MCF 10A (cell line): ENCODE measurements at regions of chr6 and their contacts with region 1.

Region 1: GRCh38 chr6:133184798-133185372 is 56.3 kb upstream of the EYA4 start:
- DNase-seq: peak; percentile 22
- H3K4me3 Mint-ChIP-seq: no peak overlapping the region
- H3K27ac Mint-ChIP-seq: no peak overlapping the region
- H3K4me1 Mint-ChIP-seq: no peaks in the 10 kb centered on the region
- H3K27me3 Mint-ChIP-seq: peaks cover 73% of the 10 kb centered on the region
- CTCF ChIP-seq: peak; percentile 55

Region 2: GRCh38 chr6:132236744-132237143 is 948.1 kb before region 1 on chr6:
- CTCF ChIA-PET with region 1: no interaction called
- POLR2A ChIA-PET with region 1: no interaction called
- intact Hi-C with region 1: no loop called
- DNase-seq: no peak
- H3K4me3 Mint-ChIP-seq: no peak overlapping the region
- H3K27ac Mint-ChIP-seq: no peak overlapping the region
- H3K4me1 Mint-ChIP-seq: no peaks in the 10 kb centered on the region
- H3K27me3 Mint-ChIP-seq: no peaks in the 10 kb centered on the region
- CTCF ChIP-seq: no peak

Region 3: GRCh38 chr6:132830334-132830751 is 354.5 kb before region 1 on chr6:
- CTCF ChIA-PET with region 1: interaction called, 3 read pairs
- POLR2A ChIA-PET with region 1: no interaction called
- intact Hi-C with region 1: loop called (anchors 5 kb)
- DNase-seq: peak; percentile 45
- H3K4me3 Mint-ChIP-seq: no peak overlapping the region
- H3K27ac Mint-ChIP-seq: no peak overlapping the region
- H3K4me1 Mint-ChIP-seq: no peaks in the 10 kb centered on the region
- H3K27me3 Mint-ChIP-seq: peaks cover 19% of the 10 kb centered on the region
- CTCF ChIP-seq: peak; percentile 41

Region 4: DNA sequence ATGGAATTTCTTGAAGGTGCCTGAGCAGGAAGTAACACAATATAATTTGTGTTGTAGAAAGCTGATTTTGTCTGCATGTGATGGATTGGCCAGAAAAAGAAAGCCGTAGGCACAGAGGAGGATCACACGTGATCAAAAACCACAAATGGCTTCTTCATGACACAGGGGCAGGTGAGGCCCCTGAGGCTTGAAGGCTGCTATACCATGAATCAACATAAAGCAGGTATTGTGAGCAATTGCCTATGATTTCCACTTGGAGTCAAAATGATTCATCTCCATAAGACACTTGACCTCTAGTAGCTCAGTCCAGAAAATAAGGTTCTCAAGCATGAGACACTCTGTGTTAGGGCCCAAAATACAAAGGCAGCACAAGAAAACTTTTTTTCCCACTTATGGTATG is 13.8 kb after region 1 on chr6:
- CTCF ChIA-PET with region 1: interaction called, 10 read pairs
- POLR2A ChIA-PET with region 1: no interaction called
- intact Hi-C with region 1: no loop called
- DNase-seq: peak; percentile 5
- H3K4me3 Mint-ChIP-seq: no peak overlapping the region
- H3K27ac Mint-ChIP-seq: no peak overlapping the region
- H3K4me1 Mint-ChIP-seq: no peaks in the 10 kb centered on the region
- H3K27me3 Mint-ChIP-seq: peaks cover 100% of the 10 kb centered on the region
- CTCF ChIP-seq: no peak

Region 5: DNA sequence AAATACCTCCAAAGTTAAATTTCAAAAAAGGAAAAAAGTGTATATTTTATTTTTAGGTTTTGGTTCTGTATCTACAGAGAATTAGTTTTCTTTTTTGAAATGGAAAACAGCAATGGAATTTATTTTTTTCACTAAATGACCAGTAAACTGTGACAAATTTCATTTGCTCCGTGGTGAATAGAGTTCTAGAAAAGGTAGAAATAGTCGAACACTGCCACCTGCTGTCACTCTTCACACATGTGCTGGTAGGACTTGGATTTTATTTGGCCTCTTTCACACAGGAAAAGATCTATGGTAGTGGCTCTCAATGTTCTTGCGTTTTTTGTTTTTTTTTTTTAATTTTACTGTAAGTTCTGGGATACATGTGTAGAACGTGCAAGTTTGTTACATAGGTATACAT is 368.8 kb after region 1 on chr6:
- CTCF ChIA-PET with region 1: interaction called, 12 read pairs
- POLR2A ChIA-PET with region 1: no interaction called
- intact Hi-C with region 1: loop called (anchors 1 kb)
- DNase-seq: peak; percentile 70
- H3K4me3 Mint-ChIP-seq: no peak overlapping the region
- H3K27ac Mint-ChIP-seq: no peak overlapping the region
- H3K4me1 Mint-ChIP-seq: peaks cover 12% of the 10 kb centered on the region
- H3K27me3 Mint-ChIP-seq: no peaks in the 10 kb centered on the region
- CTCF ChIP-seq: peak; percentile 61